ENCODE measurements at regions of chr11 and their contacts with region 1.

Region 1: GRCh38 chr11:90222459-90223247 is at the start of gene CHORDC1:
- DNase-seq: peak; percentile 93
- H3K4me3 Mint-ChIP-seq: peak within 1 kb of the TSS; percentile 97
- H3K27ac Mint-ChIP-seq: peak within 1 kb of the TSS; percentile 93
- H3K4me1 Mint-ChIP-seq: peaks cover 46% of the 10 kb centered on the region
- H3K27me3 Mint-ChIP-seq: peaks cover 4% of the 10 kb centered on the region
- total RNA-seq, gene CHORDC1: 128 and 130 TPM in 2 replicates

Region 2: DNA sequence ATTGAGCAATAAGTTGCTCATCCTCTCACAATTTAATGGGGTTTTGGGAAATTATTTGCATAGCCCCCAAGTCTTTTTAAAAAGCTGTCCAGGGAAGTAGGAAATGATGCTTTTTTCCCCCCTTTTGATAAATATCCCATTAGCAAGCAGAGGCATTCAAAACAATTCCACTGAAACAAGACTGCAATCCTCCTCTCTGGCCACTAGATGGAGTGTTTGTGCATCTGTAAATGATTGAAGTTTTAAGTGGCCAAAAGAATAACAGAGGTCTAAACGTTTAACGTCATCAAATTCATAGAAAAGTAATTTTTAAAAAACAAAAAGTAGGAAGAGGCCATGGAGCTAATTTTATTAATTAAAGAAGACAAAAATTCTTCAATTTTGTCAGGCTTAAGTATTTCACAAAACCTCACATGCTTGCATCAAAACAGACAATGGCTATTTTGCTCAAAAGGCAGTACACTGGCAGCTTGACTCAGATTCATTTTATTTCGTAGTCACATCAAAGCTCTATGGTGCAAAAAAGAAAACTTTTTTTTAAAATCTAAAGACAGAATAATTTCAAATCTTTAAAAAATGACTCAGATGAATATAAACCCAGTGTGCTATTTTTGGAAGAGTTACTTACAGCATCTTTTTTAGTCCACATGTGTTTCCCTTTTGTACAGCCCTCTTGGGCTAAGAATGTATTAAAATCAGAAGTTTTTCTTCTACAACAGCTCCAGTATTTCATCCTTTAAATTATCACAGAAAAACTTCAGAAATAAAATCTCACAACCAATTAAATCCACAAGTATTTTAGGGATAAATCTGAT is 17.6 kb before region 1 on chr11:
- intact Hi-C with region 1: loop called (anchors 1 kb)
- DNase-seq: no peak
- H3K4me3 Mint-ChIP-seq: no peak overlapping the region
- H3K27ac Mint-ChIP-seq: peak overlapping the region; percentile 84
- H3K4me1 Mint-ChIP-seq: peaks cover 10% of the 10 kb centered on the region
- H3K27me3 Mint-ChIP-seq: no peaks in the 10 kb centered on the region

Region 3: GRCh38 chr11:90241414-90241813 is 18.8 kb after region 1 on chr11:
- intact Hi-C with region 1: loop called (anchors 2 kb)
- DNase-seq: no peak
- H3K4me3 Mint-ChIP-seq: no peak overlapping the region
- H3K27ac Mint-ChIP-seq: no peak overlapping the region
- H3K4me1 Mint-ChIP-seq: no peaks in the 10 kb centered on the region
- H3K27me3 Mint-ChIP-seq: peaks cover 25% of the 10 kb centered on the region

Region 4: GRCh38 chr11:90274362-90274761 is 51.7 kb after region 1 on chr11:
- intact Hi-C with region 1: no loop called
- DNase-seq: no peak
- H3K4me3 Mint-ChIP-seq: no peak overlapping the region
- H3K27ac Mint-ChIP-seq: no peak overlapping the region
- H3K4me1 Mint-ChIP-seq: no peaks in the 10 kb centered on the region
- H3K27me3 Mint-ChIP-seq: no peaks in the 10 kb centered on the region

Measured in activated T-helper 1 cell treated with anti-CD3 and anti-CD28 coated beads, Interleukin-12 subunit alpha, Interleukin-12 subunit beta, Interleukin-2, Interleukin-4 antibody, amounts not matched to agents 30 ng/mL and 10 ng/mL and 1 ng/mL, durations not matched to agents 14 hours and 24 hours and 36 hours (primary cell).